Heart left ventricle (tissue), 16 donors: ENCODE measurements at regions of chr22 and their contacts with region 1.

Region 1: GRCh38 chr22:36277482-36278291 is 24.8 kb downstream of the APOL1 start:
- DNase-seq: peak in 3 of 5 donors; percentile 57 to 62 (median 60)
- ATAC-seq: peak; percentile 38 to 80 (median 63)
- H3K4me3 ChIP-seq: peak overlapping the region in 3 of 12 donors; percentile 1 to 14 (median 13)
- H3K27ac ChIP-seq: peak overlapping the region in 2 of 12 donors; percentile 18 to 24
- H3K4me1 ChIP-seq: peaks cover 0 to 15% (median 9%) of the 10 kb centered on the region in 12 donors
- H3K27me3 ChIP-seq: no peaks in the 10 kb centered on the region
- CTCF ChIP-seq: peak; percentile 65 to 87 (median 76)
- POLR2A ChIP-seq: no peak

Region 2: DNA sequence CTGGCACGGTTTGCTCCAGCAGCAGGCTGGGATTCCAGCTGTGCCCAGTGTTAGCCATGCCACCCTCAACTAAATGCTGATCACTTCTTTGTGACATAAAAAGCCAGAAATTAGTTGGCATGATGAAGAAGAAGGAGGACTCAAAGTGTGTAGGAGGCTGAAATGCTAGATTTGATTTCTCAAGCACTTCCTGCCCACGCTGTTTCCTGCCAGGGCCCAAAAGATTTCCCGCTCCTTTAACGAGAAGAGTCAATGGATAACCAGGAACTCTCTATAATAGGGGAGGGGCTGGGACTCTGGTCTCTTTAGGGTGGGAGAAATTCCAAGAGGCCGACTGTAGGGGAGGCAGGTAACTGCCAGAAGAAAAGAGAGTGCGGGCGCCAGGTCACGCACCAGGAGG is 143.5 kb before region 1 on chr22:
- intact Hi-C with region 1: no loop called
- DNase-seq: peak in 1 of 5 donors; percentile 15
- ATAC-seq: no peak
- H3K4me3 ChIP-seq: no peak overlapping the region
- H3K27ac ChIP-seq: no peak overlapping the region
- H3K4me1 ChIP-seq: peaks cover 0 to 9% (median 0%) of the 10 kb centered on the region in 12 donors
- H3K27me3 ChIP-seq: no peaks in the 10 kb centered on the region
- CTCF ChIP-seq: no peak
- POLR2A ChIP-seq: no peak

Region 3: DNA sequence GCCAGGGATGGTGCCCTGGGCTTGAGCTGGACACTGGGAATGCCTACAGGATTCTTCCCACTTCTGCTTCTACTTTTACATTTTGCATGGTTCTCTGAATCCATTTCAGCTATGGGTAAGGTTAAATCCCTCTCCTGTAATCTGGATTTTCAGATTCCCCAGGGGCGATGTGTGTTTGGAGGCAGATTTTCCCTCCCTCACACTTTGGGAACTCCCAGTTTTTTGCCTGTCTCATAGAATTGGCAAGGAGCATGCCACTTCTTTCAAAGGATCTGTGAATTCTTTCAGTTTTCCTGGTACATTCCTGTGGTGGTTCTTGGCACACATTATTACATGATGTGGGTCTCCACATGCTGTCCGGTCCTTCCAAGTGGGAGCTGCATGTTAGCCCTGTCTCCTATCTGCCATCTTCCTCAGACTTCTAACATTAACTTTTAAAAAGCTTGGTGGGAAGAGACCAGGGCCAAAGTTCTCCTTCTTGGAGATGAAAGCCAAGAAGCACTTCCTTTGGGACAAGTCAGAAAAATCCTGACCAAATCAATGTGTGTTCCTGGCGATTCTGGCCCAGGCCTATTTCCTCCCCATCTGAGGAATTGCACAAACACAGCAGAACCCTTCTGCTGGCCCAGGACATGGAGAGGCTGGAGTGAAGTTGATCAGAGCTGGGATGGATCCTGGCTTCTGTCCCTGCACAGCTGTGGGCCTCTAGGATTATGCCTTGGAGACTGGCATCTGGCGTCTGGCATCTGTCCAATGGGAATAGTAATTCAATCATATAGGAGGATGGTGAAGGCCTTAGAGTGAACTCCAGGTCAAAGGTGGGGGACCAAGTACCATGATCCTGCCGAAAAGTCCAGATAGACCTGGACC is 32.9 kb before region 1 on chr22:
- intact Hi-C with region 1: loop called in 1 of 10 experiments (anchors 2 kb)
- DNase-seq: peak in 2 of 5 donors; percentile 51 to 73
- ATAC-seq: peak; percentile 43 to 86 (median 74)
- H3K4me3 ChIP-seq: no peak overlapping the region
- H3K27ac ChIP-seq: peak overlapping the region; percentile 51 to 82 (median 74)
- H3K4me1 ChIP-seq: peaks cover 4 to 28% (median 25%) of the 10 kb centered on the region in 12 donors
- H3K27me3 ChIP-seq: no peaks in the 10 kb centered on the region
- CTCF ChIP-seq: no peak
- POLR2A ChIP-seq: no peak